CD4-positive, alpha-beta T cell (primary cell): ENCODE measurements at regions of chr17 and their contacts with region 1.

Region 1: DNA sequence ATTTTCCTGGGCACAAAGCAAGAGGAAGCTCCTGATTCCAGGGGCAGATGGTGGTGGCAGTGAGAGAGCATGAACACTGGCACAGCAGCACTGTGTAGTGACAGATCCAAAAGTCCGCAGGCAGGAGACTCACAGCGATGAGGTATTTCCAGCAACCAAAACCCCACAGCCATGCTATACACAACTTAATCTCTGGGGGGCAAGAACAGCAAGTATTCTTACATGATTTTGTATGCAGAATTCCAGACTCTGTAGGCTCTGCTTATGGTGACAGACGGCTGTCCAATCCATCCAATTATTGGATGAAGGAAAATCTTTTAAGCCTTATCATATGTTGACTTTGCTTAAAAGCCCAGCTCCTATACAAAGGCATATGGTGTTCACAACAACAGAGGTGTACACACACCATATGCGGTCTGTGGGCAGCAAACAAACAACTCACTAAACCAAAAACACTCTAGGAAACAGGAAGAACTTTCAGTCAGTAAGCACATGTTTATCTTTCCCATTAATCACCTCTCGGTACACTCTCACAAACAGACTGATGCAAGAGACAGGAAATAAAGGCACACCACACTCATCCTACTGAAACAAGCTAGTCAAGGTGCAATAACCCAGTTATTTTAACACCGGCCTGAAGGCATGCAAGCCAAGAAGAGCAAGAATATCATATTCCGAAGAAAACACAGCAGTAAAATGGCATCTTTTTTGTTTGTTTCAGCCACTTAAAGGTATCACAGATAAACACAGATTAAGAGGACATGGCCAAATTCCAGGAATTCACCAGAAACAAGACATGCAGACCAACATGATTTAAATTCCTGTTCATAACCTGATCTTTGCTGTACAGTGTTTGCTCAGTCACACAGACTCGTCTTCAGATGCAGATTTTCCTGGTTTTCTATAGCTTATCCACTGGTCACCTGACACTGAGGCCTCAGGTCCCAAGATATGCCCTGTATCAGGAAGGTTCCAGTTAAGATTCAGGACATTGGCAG is 47.8 kb downstream of the ERN1 start:
- DNase-seq: peak in 8 of 14 experiments; percentile 12 to 84 (median 30)
- ATAC-seq: peak; percentile 83
- H3K4me3 ChIP-seq: peak overlapping the region; percentile 11
- H3K4me3 Mint-ChIP-seq: peak overlapping the region; percentile 50
- H3K27ac ChIP-seq: peak overlapping the region in 1 of 2 donors; percentile 67
- H3K27ac Mint-ChIP-seq: no peak overlapping the region
- H3K4me1 ChIP-seq: peaks cover 64% of the 10 kb centered on the region
- H3K4me1 Mint-ChIP-seq: peaks cover 27% of the 10 kb centered on the region
- H3K27me3 ChIP-seq: no peaks in the 10 kb centered on the region
- H3K27me3 Mint-ChIP-seq: no peaks in the 10 kb centered on the region
- CTCF ChIP-seq: peak; percentile 28

Region 2: DNA sequence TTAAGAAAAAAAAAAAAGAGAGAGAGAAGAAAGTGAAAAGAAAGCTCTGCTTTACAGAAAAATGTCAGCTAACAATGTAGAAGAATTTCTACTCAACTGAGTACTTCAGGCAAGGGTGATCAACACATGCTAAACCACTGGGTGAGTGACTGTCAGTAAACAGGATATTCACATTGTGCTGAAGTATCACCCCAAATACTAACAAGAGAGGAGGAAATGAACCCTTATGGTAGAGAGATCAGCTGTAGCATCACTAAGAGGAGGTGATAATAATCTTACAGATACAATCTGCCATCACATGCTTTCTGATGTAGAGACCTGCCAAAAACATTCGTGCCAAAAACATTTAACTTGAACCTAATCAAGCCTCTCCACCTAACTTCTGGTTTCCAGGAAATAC is 30.9 kb before region 1 on chr17:
- CTCF ChIA-PET with region 1: interaction called, 4 read pairs
- POLR2A ChIA-PET with region 1: interaction called, 21 read pairs
- intact Hi-C with region 1: no loop called
- DNase-seq: peak in 5 of 14 experiments; percentile 16 to 88 (median 69)
- ATAC-seq: peak; percentile 100
- H3K4me3 ChIP-seq: no peak overlapping the region
- H3K4me3 Mint-ChIP-seq: peak overlapping the region; percentile 17
- H3K27ac ChIP-seq: peak overlapping the region in 1 of 2 donors; percentile 78
- H3K27ac Mint-ChIP-seq: peak overlapping the region; percentile 85
- H3K4me1 ChIP-seq: peaks cover 59% of the 10 kb centered on the region
- H3K4me1 Mint-ChIP-seq: peaks cover 57% of the 10 kb centered on the region
- H3K27me3 ChIP-seq: no peaks in the 10 kb centered on the region
- H3K27me3 Mint-ChIP-seq: no peaks in the 10 kb centered on the region
- CTCF ChIP-seq: no peak